HCT116 (cell line): ENCODE measurements at regions of chr6 and their contacts with region 1.

Region 1: GRCh38 chr6:139881728-139882211 is 507.3 kb upstream of the CITED2 start:
- DNase-seq: peak; percentile 53
- ATAC-seq: peak; percentile 90
- H3K4me3 ChIP-seq: no peak overlapping the region
- H3K27ac ChIP-seq: no peak overlapping the region
- H3K4me1 ChIP-seq: peaks cover 14 to 23% of the 10 kb centered on the region in 2 experiments
- H3K27me3 ChIP-seq: no peaks in the 10 kb centered on the region
- CTCF ChIP-seq: peak; percentile 35 to 74 (median 60); a peak in 5 of 6 replicates
- POLR2A ChIP-seq: no peak
- RAD21 ChIP-seq: peak; percentile 74

Region 2: DNA sequence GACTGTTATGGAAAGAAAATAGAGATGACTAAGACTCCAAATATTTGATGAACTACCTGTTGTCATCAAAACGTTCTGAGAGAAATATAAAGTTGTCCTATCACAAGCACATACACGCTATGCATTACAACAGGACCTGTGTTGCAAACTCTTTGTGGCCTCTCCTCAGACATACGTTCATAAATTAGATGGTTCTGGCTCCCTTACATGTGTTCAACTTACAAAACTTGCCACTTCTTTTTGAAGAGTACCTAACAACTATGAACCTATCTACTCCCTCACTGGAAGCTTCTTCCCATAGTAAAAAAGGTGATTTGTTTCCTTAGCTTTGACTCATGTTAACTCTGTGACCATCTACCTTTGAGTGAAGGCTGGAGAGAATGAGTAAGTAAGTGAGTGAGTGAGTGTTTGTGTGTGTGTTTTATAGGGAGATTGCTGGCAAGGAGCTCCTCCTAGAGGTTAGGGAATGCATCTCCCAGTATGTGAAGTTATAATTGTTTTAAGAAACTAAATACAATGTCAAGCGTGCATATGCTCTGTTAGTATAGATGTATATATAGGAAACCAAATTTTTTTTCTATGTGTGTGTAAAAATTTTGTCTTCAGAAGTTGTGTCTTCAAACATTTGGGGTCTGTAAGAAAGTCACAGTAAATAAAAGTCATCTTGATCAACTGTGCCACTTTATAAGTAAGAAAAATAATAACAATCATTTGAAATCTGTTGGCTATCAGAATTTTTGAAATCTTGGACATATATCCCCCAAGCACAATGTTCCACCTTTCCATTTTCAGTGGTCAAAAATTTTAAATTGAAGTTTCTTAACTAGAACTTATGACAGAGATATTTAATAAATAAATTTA is 1039.8 kb after region 1 on chr6:
- CTCF ChIA-PET with region 1: no interaction called
- POLR2A ChIA-PET with region 1: no interaction called
- RAD21 ChIA-PET with region 1: no interaction called
- intact Hi-C with region 1: loop called (anchors 5 kb)
- DNase-seq: peak; percentile 65
- ATAC-seq: peak; percentile 93
- H3K4me3 ChIP-seq: no peak overlapping the region
- H3K27ac ChIP-seq: no peak overlapping the region
- H3K4me1 ChIP-seq: no peaks in the 10 kb centered on the region
- H3K27me3 ChIP-seq: no peaks in the 10 kb centered on the region
- CTCF ChIP-seq: peak; percentile 47 to 79 (median 67); a peak in 5 of 6 replicates
- POLR2A ChIP-seq: no peak
- RAD21 ChIP-seq: peak; percentile 91